Endothelial cell of umbilical vein (primary cell): ENCODE measurements at regions of chr5 and their contacts with region 1.

Region 1: DNA sequence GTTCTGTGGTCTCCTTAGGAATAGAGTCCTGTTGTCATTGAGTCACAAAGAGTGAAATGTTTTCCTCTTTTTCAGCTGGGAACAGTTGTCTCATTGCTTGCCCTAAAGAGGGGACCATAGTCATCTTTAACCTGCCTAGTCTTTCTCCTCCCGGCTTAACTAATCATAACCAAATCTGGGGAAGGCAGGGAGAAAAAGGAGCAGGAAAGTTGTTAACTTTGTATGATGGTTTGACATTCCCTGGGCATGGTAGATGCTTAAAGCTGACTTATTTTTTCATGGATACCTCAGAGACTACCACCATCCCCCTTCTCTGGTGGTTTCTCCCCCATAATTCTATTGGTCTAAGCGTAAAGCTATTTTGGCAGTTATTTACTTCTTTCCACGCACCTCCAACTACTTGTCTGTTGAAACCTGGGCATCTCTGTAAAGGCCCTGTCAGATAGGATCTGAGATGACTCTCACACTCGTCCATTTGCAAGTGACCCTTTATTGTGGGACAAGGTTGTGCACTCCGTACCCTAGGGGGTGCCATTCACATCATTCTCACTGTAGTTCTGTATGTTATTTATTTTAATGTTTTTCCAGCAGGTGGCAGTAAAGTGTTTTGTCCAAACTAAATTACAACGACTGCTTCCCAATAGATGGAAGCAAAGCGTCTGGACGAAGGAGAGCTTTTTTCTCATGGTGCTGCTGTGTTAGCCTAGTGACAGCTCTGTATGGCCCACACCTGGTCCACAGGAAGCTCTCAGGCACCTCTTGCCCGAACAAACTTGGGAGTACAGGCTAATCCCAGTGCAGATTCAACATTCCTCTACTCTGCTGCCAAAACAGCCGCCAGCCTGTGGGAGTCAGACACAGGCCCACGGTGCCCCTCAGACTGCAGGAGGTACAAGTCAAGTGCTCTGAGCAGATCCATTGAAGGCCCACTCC is 3.0 kb upstream of the FAM13B start:
- DNase-seq: peak; percentile 87
- H3K4me3 ChIP-seq: no peak overlapping the region
- H3K27ac ChIP-seq: no peak overlapping the region
- H3K4me1 ChIP-seq: peaks cover 10% of the 10 kb centered on the region
- H3K27me3 ChIP-seq: no peaks in the 10 kb centered on the region
- CTCF ChIP-seq: peak; percentile 74 to 84
- POLR2A ChIP-seq: no peak

Region 2: DNA sequence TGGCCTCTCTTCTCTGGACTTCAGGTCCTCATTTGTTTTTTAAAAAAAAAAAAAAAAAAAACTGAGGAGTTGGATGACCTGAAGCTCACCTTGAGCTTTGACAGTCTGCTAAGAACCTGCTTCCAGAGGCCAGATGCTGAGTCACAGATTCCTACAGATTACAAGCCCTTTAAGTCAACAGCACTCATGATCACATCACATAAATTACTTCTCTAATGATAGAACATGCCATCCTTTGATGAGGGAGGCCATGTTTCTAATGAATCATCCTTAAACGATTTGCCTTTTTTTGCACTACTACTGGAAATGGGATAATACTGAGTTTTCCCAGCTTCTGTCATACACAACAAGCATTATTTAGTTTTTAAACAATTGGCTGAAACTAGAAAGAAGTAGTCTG is 202.4 kb before region 1 on chr5:
- CTCF ChIA-PET with region 1: no interaction called
- POLR2A ChIA-PET with region 1: no interaction called
- dilution Hi-C with region 1: no loop called
- intact Hi-C with region 1: no loop called
- DNase-seq: no peak
- H3K4me3 ChIP-seq: no peak overlapping the region
- H3K27ac ChIP-seq: no peak overlapping the region
- H3K4me1 ChIP-seq: peaks cover 2% of the 10 kb centered on the region
- H3K27me3 ChIP-seq: peaks cover 5 to 8% of the 10 kb centered on the region in 2 experiments
- CTCF ChIP-seq: no peak
- POLR2A ChIP-seq: no peak

Region 3: DNA sequence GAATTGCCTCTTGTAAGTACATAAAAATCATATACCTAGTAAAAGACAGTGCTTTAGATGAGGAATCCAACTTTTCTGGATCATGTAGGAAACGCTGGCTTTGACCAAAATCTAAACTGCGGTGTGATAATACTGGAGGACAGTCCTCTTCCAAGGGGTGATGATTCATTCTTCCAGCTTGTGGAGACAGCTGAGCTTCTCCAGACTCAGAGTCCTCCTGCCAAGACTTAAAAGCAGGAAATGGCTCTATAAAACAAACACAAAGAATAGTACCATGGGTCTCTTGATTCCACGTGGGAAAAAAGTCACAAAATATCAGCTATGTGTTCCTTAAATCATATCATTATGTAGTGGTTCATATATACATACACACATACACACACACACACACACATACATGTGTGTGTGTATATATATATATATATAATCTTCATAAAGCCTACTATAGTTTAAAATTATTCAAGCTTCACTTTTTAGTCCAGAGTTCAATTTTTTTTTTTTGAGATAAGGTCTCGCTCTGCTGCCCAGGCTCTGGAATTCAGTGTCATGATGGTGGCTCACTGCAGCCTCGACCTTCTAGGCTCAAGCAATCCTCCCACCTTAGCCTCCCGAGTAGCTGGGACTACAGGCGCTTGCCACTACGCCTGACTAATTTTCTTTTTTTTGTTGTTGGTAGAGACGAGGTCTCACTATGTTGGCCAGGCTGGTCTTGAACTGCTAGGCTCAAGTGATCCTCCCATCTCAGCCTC is 81.6 kb before region 1 on chr5:
- CTCF ChIA-PET with region 1: interaction called, 11 read pairs
- POLR2A ChIA-PET with region 1: no interaction called
- dilution Hi-C with region 1: no loop called
- intact Hi-C with region 1: no loop called
- DNase-seq: peak; percentile 91
- H3K4me3 ChIP-seq: peak overlapping the region in 1 of 3 experiments; percentile 23
- H3K27ac ChIP-seq: peak overlapping the region; percentile 70
- H3K4me1 ChIP-seq: peaks cover 36% of the 10 kb centered on the region
- H3K27me3 ChIP-seq: no peaks in the 10 kb centered on the region
- CTCF ChIP-seq: no peak
- POLR2A ChIP-seq: no peak

Region 4: DNA sequence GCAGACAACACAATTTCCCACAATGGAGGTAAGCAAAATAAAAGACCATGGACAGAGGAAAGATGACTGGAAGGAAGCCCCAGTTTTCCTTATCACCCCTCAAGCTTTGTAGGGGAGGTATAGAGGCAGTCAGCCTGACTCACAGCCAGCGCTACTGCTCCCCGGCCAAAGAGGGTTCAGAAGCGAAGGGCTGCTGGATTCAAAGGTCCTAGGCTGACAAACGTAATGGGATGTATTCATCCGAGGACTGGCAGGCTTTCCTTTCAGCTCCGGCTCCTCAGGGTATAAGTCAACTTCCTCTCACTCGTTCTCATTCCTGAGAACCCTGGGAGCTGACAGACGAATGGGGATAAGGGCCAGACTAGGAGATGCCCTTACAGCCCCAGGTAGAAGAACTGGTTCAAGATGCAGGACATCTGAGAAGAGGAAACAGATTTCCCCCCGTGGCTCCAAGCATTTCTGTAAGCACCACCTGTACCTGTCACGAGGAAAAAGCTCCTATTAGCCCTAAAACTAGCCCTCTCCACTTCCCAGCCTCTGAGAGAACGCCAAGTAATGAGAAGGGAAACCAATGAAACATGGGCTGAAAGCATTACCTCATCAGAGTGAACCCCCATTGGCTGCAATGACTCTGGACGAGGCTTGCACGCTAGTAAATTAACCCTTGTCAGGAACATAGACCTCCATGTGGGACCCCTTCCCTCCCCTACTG is 19.1 kb after region 1 on chr5:
- CTCF ChIA-PET with region 1: interaction called, 25 read pairs
- POLR2A ChIA-PET with region 1: no interaction called
- dilution Hi-C with region 1: no loop called
- intact Hi-C with region 1: no loop called
- DNase-seq: no peak
- H3K4me3 ChIP-seq: no peak overlapping the region
- H3K27ac ChIP-seq: no peak overlapping the region
- H3K4me1 ChIP-seq: no peaks in the 10 kb centered on the region
- H3K27me3 ChIP-seq: peaks cover 6 to 16% of the 10 kb centered on the region in 2 experiments
- CTCF ChIP-seq: no peak
- POLR2A ChIP-seq: no peak

Region 5: GRCh38 chr5:138077065-138077696 is 41.3 kb after region 1 on chr5:
- CTCF ChIA-PET with region 1: interaction called, 20 read pairs
- POLR2A ChIA-PET with region 1: no interaction called
- dilution Hi-C with region 1: no loop called
- intact Hi-C with region 1: no loop called
- DNase-seq: peak; percentile 68
- H3K4me3 ChIP-seq: no peak overlapping the region
- H3K27ac ChIP-seq: no peak overlapping the region
- H3K4me1 ChIP-seq: peaks cover 3% of the 10 kb centered on the region
- H3K27me3 ChIP-seq: peaks cover 0 to 8% of the 10 kb centered on the region in 2 experiments
- CTCF ChIP-seq: peak; percentile 74 to 78
- POLR2A ChIP-seq: no peak

Region 6: GRCh38 chr5:138178516-138179276 is 142.8 kb after region 1 on chr5 and contains the starts of genes BRD8 and KIF20A:
- CTCF ChIA-PET with region 1: no interaction called
- POLR2A ChIA-PET with region 1: no interaction called
- dilution Hi-C with region 1: no loop called
- intact Hi-C with region 1: loop called (anchors 1 kb)
- DNase-seq: peak; percentile 98
- H3K4me3 ChIP-seq: peak within 1 kb of the TSS; percentile 71 to 95 (median 87)
- H3K27ac ChIP-seq: peak within 1 kb of the TSS; percentile 68
- H3K4me1 ChIP-seq: peaks cover 22% of the 10 kb centered on the region
- H3K27me3 ChIP-seq: no peaks in the 10 kb centered on the region
- CTCF ChIP-seq: no peak
- POLR2A ChIP-seq: peak; percentile 69
- total RNA-seq, gene BRD8: 69.7 and 73.7 TPM in 2 replicates
- total RNA-seq, gene KIF20A: 72.0 and 78.1 TPM in 2 replicates